ENCODE measurements at regions of chr5 and their contacts with region 1.

Region 1: DNA sequence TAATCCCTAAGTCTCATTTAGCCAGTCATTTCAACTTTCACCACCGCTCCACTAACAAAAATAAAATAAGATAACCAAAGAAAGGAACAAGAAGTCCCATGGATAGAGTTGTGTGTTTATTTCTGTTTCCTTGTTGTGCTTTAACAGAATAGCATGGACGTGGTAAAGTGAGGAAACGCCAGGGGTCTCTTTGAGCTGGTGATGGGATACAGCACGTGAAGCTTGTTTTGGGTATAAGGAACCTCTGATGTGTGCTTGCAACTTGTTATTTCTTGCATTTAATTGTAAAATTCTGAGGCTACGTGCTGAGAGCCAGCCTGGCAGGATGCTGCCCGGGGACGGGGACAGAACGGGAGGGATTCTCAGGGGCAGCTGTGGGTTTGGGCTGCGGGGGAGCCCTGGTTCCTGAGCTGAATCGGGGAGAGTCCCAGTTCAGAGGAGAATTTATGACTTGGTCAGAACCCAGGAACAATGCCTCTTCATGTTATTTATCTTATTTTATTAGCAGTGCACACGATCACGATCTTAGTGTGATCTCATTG is 63.4 kb downstream of the ANKRD33B start:
- DNase-seq: no peak
- ATAC-seq: no peak
- H3K4me3 Mint-ChIP-seq: peak overlapping the region; percentile 80
- H3K27ac Mint-ChIP-seq: peak overlapping the region; percentile 85
- H3K4me1 Mint-ChIP-seq: peaks cover 68% of the 10 kb centered on the region
- H3K27me3 Mint-ChIP-seq: no peaks in the 10 kb centered on the region
- CTCF ChIP-seq: no peak

Region 2: GRCh38 chr5:10452768-10453331 is 174.4 kb before region 1 on chr5:
- CTCF ChIA-PET with region 1: interaction called, 156 read pairs
- POLR2A ChIA-PET with region 1: interaction called, 8 read pairs
- intact Hi-C with region 1: loop called (anchors 1 kb)
- DNase-seq: no peak
- ATAC-seq: peak; percentile 94
- H3K4me3 Mint-ChIP-seq: no peak overlapping the region
- H3K27ac Mint-ChIP-seq: no peak overlapping the region
- H3K4me1 Mint-ChIP-seq: peaks cover 5% of the 10 kb centered on the region
- H3K27me3 Mint-ChIP-seq: no peaks in the 10 kb centered on the region
- CTCF ChIP-seq: peak; percentile 39

Region 3: DNA sequence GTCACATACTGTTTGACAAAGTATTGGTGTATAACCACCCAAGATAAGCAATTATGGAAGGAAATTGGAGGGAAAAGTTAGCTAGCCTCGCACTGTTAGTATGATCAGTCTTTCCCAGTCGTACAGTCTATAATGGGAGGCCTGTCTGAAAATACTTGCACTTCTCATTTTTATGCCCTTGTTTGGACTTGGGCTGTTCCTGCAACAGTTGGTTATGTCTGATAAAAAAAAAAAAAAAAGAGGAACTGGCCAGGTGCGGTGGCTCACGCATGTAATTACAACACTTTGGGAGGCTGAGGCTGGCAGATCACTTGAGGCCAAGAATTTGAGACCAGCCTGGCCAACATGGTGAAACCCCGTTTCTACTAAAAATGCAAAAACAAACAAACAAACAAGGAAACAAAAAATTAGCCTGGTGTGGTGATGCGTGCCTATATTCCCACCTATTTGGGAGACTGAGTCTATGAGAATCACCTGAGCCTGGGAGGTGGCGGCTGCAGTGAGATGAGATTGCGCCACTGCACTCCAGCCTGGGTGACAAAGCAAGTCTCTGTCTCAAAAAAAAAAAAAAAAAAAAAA is 121.6 kb before region 1 on chr5:
- CTCF ChIA-PET with region 1: interaction called, 3 read pairs
- POLR2A ChIA-PET with region 1: no interaction called
- intact Hi-C with region 1: loop called (anchors 1 kb)
- DNase-seq: no peak
- ATAC-seq: peak; percentile 98
- H3K4me3 Mint-ChIP-seq: peak overlapping the region; percentile 8
- H3K27ac Mint-ChIP-seq: peak overlapping the region; percentile 76
- H3K4me1 Mint-ChIP-seq: peaks cover 13% of the 10 kb centered on the region
- H3K27me3 Mint-ChIP-seq: no peaks in the 10 kb centered on the region
- CTCF ChIP-seq: no peak

Region 4: DNA sequence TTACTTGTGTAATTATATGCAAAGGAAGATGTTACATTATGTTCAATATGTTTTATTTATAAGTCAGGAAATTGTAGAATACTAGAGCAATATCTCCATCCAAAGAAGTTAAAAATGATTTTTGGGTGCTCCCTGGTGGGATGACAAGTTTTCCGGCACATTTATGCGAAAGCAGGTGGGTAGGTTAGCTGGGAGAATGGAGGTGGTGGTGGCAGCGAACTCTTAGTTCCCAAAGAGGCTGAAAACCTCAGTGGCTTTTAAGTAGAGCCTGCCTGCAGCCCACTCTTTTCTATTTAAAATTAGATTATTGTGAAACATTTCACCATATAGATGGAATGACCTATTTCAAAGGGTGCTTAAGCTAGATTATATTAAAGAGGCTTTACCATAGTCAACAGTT is 11.5 kb before region 1 on chr5:
- CTCF ChIA-PET with region 1: interaction called, 11 read pairs
- POLR2A ChIA-PET with region 1: interaction called, 7 read pairs
- intact Hi-C with region 1: no loop called
- DNase-seq: no peak
- ATAC-seq: no peak
- H3K4me3 Mint-ChIP-seq: no peak overlapping the region
- H3K27ac Mint-ChIP-seq: no peak overlapping the region
- H3K4me1 Mint-ChIP-seq: peaks cover 54% of the 10 kb centered on the region
- H3K27me3 Mint-ChIP-seq: no peaks in the 10 kb centered on the region
- CTCF ChIP-seq: no peak

Region 5: GRCh38 chr5:10689391-10690081 is 62.3 kb after region 1 on chr5:
- CTCF ChIA-PET with region 1: interaction called, 19 read pairs
- POLR2A ChIA-PET with region 1: interaction called, 34 read pairs
- intact Hi-C with region 1: no loop called
- DNase-seq: no peak
- ATAC-seq: peak; percentile 73
- H3K4me3 Mint-ChIP-seq: no peak overlapping the region
- H3K27ac Mint-ChIP-seq: no peak overlapping the region
- H3K4me1 Mint-ChIP-seq: peaks cover 18% of the 10 kb centered on the region
- H3K27me3 Mint-ChIP-seq: no peaks in the 10 kb centered on the region
- CTCF ChIP-seq: no peak

Region 6: DNA sequence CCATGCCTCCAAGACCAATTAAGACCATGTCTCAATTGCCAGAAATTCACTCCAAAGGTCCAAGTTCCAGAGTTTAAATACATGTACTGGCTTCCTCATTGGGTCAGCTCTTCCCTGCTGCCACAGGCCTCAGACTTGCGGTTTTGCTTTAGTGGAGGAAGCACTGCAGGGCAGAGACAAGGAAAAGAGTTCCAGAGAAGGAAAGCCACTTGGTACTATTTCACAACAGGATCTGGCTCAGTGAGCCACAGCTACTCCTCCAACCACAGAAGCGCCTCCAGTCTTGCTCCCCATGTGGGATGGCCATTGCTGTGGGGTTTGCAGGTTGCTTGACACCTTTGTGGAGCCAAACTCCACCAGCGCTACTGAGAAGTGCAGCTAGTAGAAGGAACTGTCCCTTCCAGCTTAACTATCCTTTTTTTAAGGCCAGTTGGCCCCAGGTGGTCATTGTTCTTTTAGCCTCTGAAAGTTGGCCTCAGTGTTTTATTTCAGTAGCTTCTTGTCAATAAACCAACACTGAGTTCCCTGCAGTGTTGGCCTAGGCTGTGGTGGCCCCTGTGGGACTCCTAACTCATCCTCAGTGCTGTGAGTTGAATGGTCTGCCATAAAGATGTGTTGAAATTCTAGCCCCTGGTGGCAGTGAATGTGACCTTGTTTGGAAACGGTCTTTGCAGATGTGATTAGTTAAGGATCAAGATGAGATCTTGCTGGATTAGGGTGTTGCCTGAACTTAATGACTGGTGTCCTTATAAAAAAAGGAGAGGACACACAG is 227.5 kb after region 1 on chr5:
- CTCF ChIA-PET with region 1: no interaction called
- POLR2A ChIA-PET with region 1: no interaction called
- intact Hi-C with region 1: no loop called
- DNase-seq: no peak
- ATAC-seq: no peak
- H3K4me3 Mint-ChIP-seq: no peak overlapping the region
- H3K27ac Mint-ChIP-seq: no peak overlapping the region
- H3K4me1 Mint-ChIP-seq: no peaks in the 10 kb centered on the region
- H3K27me3 Mint-ChIP-seq: peaks cover 18% of the 10 kb centered on the region
- CTCF ChIP-seq: no peak